Breast epithelium (tissue), 4 donors: ENCODE measurements at regions of chr16 and their contacts with region 1.

Region 1: GRCh38 chr16:25177831-25178688 is 38.7 kb upstream of the AQP8 start:
- DNase-seq: no peak
- H3K4me3 ChIP-seq: no peak overlapping the region
- H3K27ac ChIP-seq: no peak overlapping the region
- H3K4me1 ChIP-seq: no peaks in the 10 kb centered on the region
- H3K27me3 ChIP-seq: no peaks in the 10 kb centered on the region
- CTCF ChIP-seq: no peak
- POLR2A ChIP-seq: no peak

Region 2: DNA sequence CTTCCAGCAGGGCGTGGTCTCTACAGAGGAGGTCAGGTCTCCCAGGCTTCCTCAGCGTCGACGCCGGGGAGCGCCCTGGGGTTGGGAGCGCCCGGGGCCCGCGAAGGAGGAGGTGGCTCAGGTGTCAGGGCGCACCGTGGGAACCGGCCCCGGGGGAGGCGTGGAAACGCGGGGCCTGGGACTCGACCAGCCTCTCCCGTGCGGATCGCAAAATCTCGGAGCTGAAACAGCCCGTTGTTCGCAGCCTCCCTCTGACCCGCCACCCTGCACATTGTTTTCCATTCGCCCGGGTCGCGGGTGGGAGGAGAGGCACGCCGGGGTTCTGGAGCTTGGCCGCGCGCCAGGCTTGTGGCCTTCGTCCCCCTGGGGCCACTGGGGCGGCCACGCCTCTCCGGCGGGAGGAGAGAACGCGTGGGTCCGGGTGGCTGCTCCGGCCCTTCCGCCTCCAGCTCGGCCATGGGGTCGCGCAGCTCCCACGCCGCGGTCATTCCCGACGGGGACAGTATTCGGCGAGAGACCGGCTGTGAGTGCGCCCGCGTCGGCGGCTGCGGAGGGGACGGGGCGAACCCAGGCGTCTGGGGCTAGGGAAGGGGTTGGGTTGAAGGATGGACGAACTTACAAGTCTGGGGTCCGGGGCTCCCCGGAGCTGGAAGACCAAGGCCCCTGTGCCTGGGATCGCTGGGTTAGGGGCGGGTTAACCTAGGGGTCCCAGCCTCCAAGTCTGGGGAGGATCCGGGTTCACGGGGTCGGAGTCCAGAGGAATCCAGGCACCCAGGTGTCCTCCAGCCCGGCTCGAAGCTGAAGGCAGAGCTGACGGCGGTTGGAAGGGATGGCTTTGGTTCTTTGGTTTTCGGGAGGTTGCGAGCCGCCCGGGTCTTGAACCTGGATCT is 1423.2 kb before region 1 on chr16 and contains the start of gene CHP2:
- intact Hi-C with region 1: loop called (anchors 5 kb)
- DNase-seq: peak in 1 of 2 donors; percentile 53
- H3K4me3 ChIP-seq: peak within 1 kb of the TSS; percentile 15 to 64 (median 43)
- H3K27ac ChIP-seq: no peak within 1 kb of the TSS
- H3K4me1 ChIP-seq: no peaks in the 10 kb centered on the region
- H3K27me3 ChIP-seq: peaks cover 4 to 33% of the 10 kb centered on the region in 2 donors
- CTCF ChIP-seq: no peak
- POLR2A ChIP-seq: no peak
- total RNA-seq, gene CHP2: 0.16 to 0.33 TPM in 2 of 3 donors, not detected in the other

Region 3: GRCh38 chr16:24088767-24089166 is 1089.3 kb before region 1 on chr16:
- intact Hi-C with region 1: no loop called
- DNase-seq: no peak
- H3K4me3 ChIP-seq: no peak overlapping the region
- H3K27ac ChIP-seq: no peak overlapping the region
- H3K4me1 ChIP-seq: no peaks in the 10 kb centered on the region
- H3K27me3 ChIP-seq: peaks cover 0 to 13% of the 10 kb centered on the region in 2 donors
- CTCF ChIP-seq: no peak
- POLR2A ChIP-seq: no peak

Region 4: DNA sequence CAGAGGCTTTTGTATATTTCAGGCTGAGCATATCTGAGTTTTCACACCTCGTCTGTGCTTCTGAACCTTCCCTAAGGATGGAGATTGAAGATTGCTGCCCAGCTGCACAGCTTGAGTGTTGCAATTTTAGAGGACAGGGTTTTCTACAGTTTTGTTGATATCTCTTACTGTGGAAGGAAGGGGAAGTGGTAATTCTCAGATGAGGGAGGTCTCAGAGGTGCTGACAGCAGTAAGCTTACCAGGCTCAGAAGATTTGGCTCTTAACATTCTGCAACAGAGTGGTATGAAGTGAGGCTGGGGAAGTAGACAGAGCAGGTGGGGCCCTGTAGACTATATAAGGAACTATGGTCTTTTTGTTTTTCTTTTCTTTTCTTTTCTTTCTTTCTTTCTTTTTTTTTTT is 117.1 kb before region 1 on chr16:
- intact Hi-C with region 1: no loop called
- DNase-seq: no peak
- H3K4me3 ChIP-seq: no peak overlapping the region
- H3K27ac ChIP-seq: no peak overlapping the region
- H3K4me1 ChIP-seq: no peaks in the 10 kb centered on the region
- H3K27me3 ChIP-seq: no peaks in the 10 kb centered on the region
- CTCF ChIP-seq: no peak
- POLR2A ChIP-seq: no peak

Region 5: DNA sequence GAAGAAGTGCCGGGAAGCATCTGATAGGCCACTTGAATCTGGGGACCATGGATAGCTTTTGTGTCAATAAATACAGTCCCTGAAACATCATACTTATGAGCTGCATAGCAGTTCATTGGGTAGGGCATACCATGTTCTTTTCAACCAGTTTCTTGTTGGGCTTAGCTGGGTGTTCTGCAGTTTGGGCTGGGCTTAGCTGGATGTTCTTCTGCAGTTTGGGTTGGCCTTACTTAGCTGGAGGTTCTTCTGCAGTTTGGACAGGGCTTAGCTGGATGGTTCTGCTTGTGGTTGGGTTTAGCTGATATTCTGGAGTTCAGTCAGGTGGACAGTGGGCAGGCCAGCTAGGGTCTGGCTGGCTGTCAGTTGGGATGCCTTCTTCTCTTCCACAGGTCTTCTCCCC is 14.4 kb before region 1 on chr16:
- intact Hi-C with region 1: no loop called
- DNase-seq: no peak
- H3K4me3 ChIP-seq: no peak overlapping the region
- H3K27ac ChIP-seq: no peak overlapping the region
- H3K4me1 ChIP-seq: no peaks in the 10 kb centered on the region
- H3K27me3 ChIP-seq: no peaks in the 10 kb centered on the region
- CTCF ChIP-seq: no peak
- POLR2A ChIP-seq: no peak